ENCODE measurements at regions of chr12 and their contacts with region 1.

Region 1: DNA sequence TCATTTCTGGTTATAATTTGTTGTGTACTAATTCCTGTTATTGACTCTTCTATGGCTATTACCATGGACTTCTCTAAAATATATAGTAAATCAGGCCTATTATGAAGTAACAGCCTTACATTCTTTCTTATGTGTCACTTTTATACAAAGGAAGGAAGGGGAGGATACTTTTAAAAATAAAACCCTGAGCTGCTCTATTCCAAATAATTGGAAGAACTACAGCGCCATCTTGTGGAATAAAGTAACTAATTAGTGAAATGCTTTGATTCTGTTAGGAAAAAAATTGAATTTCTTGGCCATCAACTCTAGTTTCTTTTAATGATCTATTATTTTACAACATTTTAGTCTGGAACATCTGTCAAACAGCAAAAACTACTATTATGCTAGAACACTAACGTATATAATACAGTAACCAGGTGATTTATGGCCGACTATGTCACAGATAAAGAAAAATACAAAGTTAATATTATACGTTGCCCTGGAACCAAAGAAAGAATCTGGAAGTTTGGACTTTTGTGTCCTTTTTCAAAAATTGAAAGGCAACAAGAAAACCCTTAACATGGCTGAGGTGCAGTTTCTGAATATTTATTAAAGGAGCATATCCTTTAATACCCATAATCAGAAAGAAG is 55.0 kb upstream of the NELL2 start:
- DNase-seq: peak; percentile 18 to 57 (median 23)
- ATAC-seq: peak; percentile 66; the same call in 2 of the 3 replicates
- H3K4me3 ChIP-seq: no peak overlapping the region
- H3K27ac ChIP-seq: no peak overlapping the region
- H3K4me1 ChIP-seq: no peaks in the 10 kb centered on the region
- H3K27me3 ChIP-seq: no peaks in the 10 kb centered on the region
- CTCF ChIP-seq: peak in 2 of 3 experiments; percentile 45 to 70; a peak in 3 of 6 replicates
- EP300 ChIP-seq: no peak
- POLR2A ChIP-seq: no peak
- RAD21 ChIP-seq: peak; percentile 66 to 80

Region 2: GRCh38 chr12:43957732-43958372 is 973.2 kb before region 1 on chr12:
- CTCF ChIA-PET with region 1: no interaction called
- POLR2A ChIA-PET with region 1: no interaction called
- in situ Hi-C with region 1: no loop called
- intact Hi-C with region 1: loop called (anchors 1 kb)
- DNase-seq: peak; percentile 12 to 44 (median 16)
- ATAC-seq: peak; percentile 82
- H3K4me3 ChIP-seq: no peak overlapping the region
- H3K27ac ChIP-seq: no peak overlapping the region
- H3K4me1 ChIP-seq: no peaks in the 10 kb centered on the region
- H3K27me3 ChIP-seq: no peaks in the 10 kb centered on the region
- CTCF ChIP-seq: peak; percentile 24 to 56 (median 42); a peak in 4 of 6 replicates
- EP300 ChIP-seq: no peak
- POLR2A ChIP-seq: no peak
- RAD21 ChIP-seq: peak; percentile 50 to 54

Region 3: GRCh38 chr12:44015335-44015941 is 915.6 kb before region 1 on chr12:
- CTCF ChIA-PET with region 1: interaction called, 3 read pairs
- POLR2A ChIA-PET with region 1: interaction called, 3 read pairs
- in situ Hi-C with region 1: loop called (anchors 25 kb)
- intact Hi-C with region 1: loop called (anchors 2 kb)
- DNase-seq: peak; percentile 17 to 44 (median 25)
- ATAC-seq: peak; percentile 69
- H3K4me3 ChIP-seq: no peak overlapping the region
- H3K27ac ChIP-seq: no peak overlapping the region
- H3K4me1 ChIP-seq: no peaks in the 10 kb centered on the region
- H3K27me3 ChIP-seq: no peaks in the 10 kb centered on the region
- CTCF ChIP-seq: peak; percentile 21 to 58 (median 38); a peak in 4 of 6 replicates
- EP300 ChIP-seq: no peak
- POLR2A ChIP-seq: no peak
- RAD21 ChIP-seq: peak; percentile 66 to 69

Region 4: DNA sequence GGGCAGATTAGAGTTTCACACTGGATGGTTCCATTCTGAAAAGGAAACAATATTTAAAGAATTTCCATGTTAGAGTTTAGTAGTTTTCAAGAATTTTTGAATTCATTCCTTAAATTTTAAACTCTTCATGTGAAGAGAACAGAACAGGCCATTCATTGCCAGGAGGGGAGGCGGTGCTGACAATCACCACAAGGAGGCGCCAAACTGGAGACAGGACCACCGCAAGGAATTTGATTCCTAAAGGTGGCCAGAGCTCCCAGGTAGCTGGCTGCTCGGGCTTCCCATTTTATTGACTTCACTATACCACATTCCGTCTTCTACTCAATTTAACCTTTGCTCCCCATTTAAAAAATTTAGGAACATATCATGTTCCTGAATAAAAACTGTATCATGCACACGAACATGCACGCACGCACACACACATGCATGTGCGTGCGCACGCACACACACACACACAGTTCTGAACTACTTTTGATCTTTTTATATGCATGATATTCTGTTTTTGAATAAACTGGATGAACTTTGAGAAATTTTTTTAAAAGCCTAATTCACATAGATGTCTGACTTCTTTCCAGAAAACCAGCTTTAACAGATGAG is 156.2 kb before region 1 on chr12:
- CTCF ChIA-PET with region 1: no interaction called
- POLR2A ChIA-PET with region 1: no interaction called
- in situ Hi-C with region 1: no loop called
- intact Hi-C with region 1: loop called (anchors 5 kb)
- DNase-seq: peak; percentile 30 to 53 (median 48)
- ATAC-seq: peak; percentile 75
- H3K4me3 ChIP-seq: no peak overlapping the region
- H3K27ac ChIP-seq: no peak overlapping the region
- H3K4me1 ChIP-seq: no peaks in the 10 kb centered on the region
- H3K27me3 ChIP-seq: no peaks in the 10 kb centered on the region
- CTCF ChIP-seq: peak; percentile 62 to 69 (median 66)
- EP300 ChIP-seq: no peak
- POLR2A ChIP-seq: no peak
- RAD21 ChIP-seq: peak in 1 of 2 experiments; percentile 47; a peak in 3 of 4 replicates

Measured in K562 (cell line).